K562 (cell line): ENCODE measurements at regions of chr17 and their contacts with region 1.

Region 1: DNA sequence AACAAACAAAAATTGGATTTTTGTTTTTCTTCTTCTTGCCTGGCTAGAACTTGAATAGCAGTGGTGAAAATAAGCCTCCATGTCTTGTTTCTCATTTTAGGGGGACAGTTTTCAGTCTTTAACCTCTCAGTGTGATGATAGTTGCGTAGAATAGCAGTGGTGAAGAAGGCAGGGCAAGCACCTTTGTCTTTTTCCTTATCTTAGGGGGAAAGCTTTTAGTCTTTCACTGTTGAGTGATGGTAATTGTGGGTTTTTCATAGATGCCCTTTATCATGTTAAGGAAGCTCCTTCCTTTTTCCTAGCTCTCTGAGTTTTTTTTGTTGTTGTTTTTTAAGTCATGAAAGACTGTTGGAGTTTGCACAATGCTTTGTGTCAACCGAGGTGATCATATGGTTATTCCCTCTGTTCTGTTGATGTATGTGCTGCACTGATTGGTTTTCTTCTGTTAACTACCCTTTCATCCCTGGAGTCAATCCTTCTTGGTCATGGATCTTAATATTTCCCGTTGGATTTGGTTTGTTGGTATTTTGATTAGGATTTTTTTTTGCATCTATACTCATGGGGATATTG is 15.7 kb downstream of the NOL11 start:
- DNase-seq: no peak
- ATAC-seq: no peak
- H3K4me3 ChIP-seq: no peak overlapping the region
- H3K27ac ChIP-seq: no peak overlapping the region
- H3K4me1 ChIP-seq: no peaks in the 10 kb centered on the region
- H3K27me3 ChIP-seq: no peaks in the 10 kb centered on the region
- CTCF ChIP-seq: no peak
- EP300 ChIP-seq: no peak
- POLR2A ChIP-seq: no peak
- RAD21 ChIP-seq: no peak

Region 2: GRCh38 chr17:67746704-67747571 is 13.5 kb after region 1 on chr17:
- CTCF ChIA-PET with region 1: no interaction called
- POLR2A ChIA-PET with region 1: interaction called, 17 read pairs
- in situ Hi-C with region 1: no loop called
- intact Hi-C with region 1: no loop called
- DNase-seq: no peak
- ATAC-seq: no peak
- H3K4me3 ChIP-seq: no peak overlapping the region
- H3K27ac ChIP-seq: no peak overlapping the region
- H3K4me1 ChIP-seq: no peaks in the 10 kb centered on the region; a peak in 2 of 5 replicates
- H3K27me3 ChIP-seq: no peaks in the 10 kb centered on the region
- CTCF ChIP-seq: no peak
- EP300 ChIP-seq: no peak
- POLR2A ChIP-seq: no peak
- RAD21 ChIP-seq: no peak